Endothelial cell of umbilical vein (primary cell): ENCODE measurements at regions of chr2 and their contacts with region 1.

Region 1: DNA sequence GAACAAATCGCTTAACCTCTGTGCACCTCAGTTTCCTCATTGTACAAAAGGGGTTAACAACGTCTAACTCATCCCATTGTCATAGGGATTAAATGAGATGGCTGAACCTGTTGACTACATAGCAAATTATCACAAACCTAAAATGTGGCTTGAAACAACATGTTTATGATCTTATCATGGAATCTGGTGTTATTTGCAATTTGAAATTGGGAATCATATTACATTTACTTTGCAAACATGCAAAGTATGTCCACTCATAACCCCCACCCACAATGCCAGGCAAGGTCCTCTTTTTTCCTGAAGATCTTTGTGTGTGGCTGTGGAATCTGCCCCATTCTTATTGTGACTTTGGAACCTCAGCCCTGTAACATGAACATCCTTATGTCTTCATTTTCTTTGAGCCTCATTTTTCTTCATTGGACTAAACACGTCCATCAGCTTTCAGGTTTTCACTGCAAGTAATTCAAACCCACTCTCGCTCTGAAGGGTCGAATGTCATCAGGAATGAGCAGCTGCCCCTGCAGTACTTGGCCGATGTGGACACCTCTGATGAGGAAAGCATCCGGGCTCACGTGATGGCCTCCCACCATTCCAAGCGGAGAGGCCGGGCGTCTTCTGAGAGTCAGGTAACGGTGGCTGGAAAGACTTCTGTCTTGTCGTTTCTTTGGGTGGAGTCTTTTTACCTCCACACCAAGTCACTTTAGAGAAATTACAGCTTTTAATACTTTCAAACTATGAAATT is 39.3 kb upstream of the PRLH start:
- DNase-seq: no peak
- H3K4me3 ChIP-seq: no peak overlapping the region
- H3K27ac ChIP-seq: no peak overlapping the region
- H3K4me1 ChIP-seq: peaks cover 1% of the 10 kb centered on the region
- H3K27me3 ChIP-seq: no peaks in the 10 kb centered on the region
- CTCF ChIP-seq: no peak
- POLR2A ChIP-seq: no peak

Region 2: DNA sequence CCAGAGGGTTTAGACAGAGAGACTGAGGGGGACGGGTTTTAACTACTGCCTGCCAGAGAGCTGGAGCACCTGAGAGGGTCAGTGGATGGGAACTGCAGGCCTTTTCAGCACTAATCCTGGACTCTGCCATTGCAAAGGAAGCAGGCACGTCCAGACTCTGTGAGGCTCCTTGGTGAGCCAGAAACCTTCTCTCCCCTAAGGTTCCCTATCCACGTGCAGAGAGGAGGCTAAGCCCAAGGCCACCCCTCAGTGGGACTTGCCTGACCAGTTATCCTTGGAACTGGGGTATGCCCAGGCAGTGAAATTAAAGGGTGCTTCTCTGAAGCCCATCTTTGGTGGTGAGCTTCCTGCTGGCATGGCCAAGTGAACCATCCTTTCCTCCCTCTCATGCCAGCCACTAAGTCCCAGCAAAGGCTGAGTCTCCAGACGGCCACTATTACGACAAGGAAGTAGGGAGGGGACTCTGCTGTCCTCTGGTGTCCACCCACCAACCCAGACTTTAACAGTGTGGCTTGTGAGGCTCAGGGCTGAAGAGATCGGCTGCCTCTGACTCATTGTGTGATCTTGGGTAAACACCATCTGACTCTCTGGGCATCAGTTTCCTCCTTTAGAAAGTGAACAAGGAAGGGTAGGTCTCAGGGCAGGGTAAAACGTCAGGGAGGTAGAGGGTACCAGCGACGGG is 43.9 kb before region 1 on chr2:
- CTCF ChIA-PET with region 1: no interaction called
- POLR2A ChIA-PET with region 1: no interaction called
- dilution Hi-C with region 1: no loop called
- intact Hi-C with region 1: loop called (anchors 1 kb)
- DNase-seq: peak; percentile 26
- H3K4me3 ChIP-seq: no peak overlapping the region
- H3K27ac ChIP-seq: no peak overlapping the region
- H3K4me1 ChIP-seq: no peaks in the 10 kb centered on the region
- H3K27me3 ChIP-seq: peaks cover 55 to 74% of the 10 kb centered on the region in 2 experiments
- CTCF ChIP-seq: peak in 1 of 2 donors; percentile 16
- POLR2A ChIP-seq: no peak

Region 3: DNA sequence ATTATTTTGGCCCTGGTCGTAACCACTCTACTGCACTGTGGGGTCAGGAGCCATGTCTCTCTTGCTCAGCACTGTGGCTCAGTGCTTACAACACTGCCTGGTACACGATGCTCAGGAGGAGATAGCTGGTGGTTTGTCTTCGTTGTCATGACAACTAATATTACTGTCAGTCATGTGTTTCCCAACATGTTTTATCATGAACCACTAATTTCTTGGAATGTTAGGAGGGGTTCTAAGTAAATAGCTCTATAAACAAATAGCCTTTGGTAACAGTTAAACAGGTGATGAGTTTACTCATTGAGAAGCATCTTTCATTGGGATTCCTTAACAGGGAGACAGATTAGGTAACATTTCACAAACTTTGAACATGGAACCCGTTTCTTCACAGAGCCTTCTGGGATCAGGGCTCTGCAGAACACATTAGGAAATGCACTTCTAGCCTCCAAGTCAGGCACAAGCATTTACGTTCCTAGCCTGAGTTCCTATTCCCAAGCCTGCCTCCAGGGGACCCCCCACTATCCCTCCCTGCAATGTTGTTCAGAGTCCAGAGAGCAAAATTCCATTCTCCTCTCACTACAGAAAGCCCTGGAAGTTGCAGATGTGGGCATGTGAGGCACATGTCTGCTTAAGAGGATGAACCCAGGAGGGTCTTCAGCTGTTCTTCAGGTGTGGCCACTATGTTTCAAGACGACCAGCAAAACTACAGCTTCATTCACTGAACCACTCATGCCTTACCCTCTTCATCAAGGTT is 265.1 kb after region 1 on chr2:
- CTCF ChIA-PET with region 1: no interaction called
- POLR2A ChIA-PET with region 1: no interaction called
- dilution Hi-C with region 1: no loop called
- intact Hi-C with region 1: no loop called
- DNase-seq: no peak
- H3K4me3 ChIP-seq: no peak overlapping the region
- H3K27ac ChIP-seq: no peak overlapping the region
- H3K4me1 ChIP-seq: no peaks in the 10 kb centered on the region
- H3K27me3 ChIP-seq: no peaks in the 10 kb centered on the region
- CTCF ChIP-seq: peak in 1 of 2 donors; percentile 28
- POLR2A ChIP-seq: no peak